Naive thymus-derived CD4-positive, alpha-beta T cell (primary cell): ENCODE measurements at regions of chr19 and their contacts with region 1.

Region 1: GRCh38 chr19:58408152-58409009 is at the start of gene ZNF584:
- DNase-seq: peak; percentile 86 to 94 (median 92)
- ATAC-seq: peak; percentile 98
- H3K4me3 ChIP-seq: peak within 1 kb of the TSS; percentile 96
- H3K4me3 Mint-ChIP-seq: peak within 1 kb of the TSS; percentile 82 to 98 (median 95)
- H3K27ac ChIP-seq: peak within 1 kb of the TSS; percentile 87
- H3K27ac Mint-ChIP-seq: peak within 1 kb of the TSS; percentile 83 to 95 (median 93)
- H3K4me1 ChIP-seq: peaks cover 12 to 15% of the 10 kb centered on the region in 2 donors
- H3K4me1 Mint-ChIP-seq: peaks cover 5 to 45% (median 34%) of the 10 kb centered on the region in 7 donors
- H3K27me3 ChIP-seq: no peaks in the 10 kb centered on the region
- H3K27me3 Mint-ChIP-seq: no peaks in the 10 kb centered on the region
- total RNA-seq, gene ZNF584: 4.2 to 12.1 (median 8.8) TPM

Region 2: DNA sequence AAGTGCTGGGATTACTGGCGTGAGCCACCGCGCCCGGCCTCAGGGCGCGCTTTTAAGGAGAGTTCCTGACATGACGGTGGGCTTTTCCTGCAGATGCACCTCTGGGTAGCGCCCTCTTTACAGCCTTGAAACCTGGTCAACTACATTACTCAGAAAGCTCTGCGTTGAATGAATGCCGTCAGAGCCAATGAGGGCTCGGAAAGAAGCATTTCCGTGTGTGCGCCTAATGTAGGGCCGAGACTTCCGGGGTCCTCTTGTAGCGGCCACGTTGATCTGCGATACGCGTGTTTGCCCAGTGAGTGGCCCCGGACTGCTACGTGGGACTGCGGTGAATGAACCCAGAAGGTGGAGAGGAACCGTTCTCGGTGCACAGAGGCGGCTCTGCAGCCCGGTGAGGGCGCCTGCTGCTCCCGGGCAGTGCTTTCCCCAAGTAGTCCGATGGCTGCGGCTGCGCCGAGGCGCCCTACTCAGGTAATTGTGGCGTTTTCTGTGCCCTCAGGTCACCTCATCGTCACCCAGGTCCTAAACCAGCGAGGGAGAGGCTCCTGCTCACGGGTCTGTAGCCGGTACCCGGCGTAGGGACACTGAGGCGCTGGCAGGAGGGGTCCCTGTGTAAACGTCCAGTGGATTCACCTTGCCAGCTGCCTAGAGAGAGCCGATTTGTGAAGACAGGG is 588.8 kb before region 1 on chr19:
- CTCF ChIA-PET with region 1: no interaction called
- POLR2A ChIA-PET with region 1: no interaction called
- intact Hi-C with region 1: loop called in 1 of 2 experiments (anchors 10 kb)
- DNase-seq: peak; percentile 45 to 85 (median 79)
- ATAC-seq: peak; percentile 89
- H3K4me3 ChIP-seq: peak overlapping the region; percentile 98
- H3K4me3 Mint-ChIP-seq: peak overlapping the region; percentile 95 to 99 (median 98)
- H3K27ac ChIP-seq: peak overlapping the region; percentile 92
- H3K27ac Mint-ChIP-seq: peak overlapping the region; percentile 88 to 99 (median 95)
- H3K4me1 ChIP-seq: peaks cover 0 to 13% of the 10 kb centered on the region in 2 donors
- H3K4me1 Mint-ChIP-seq: peaks cover 38 to 73% (median 67%) of the 10 kb centered on the region in 7 donors
- H3K27me3 ChIP-seq: no peaks in the 10 kb centered on the region
- H3K27me3 Mint-ChIP-seq: no peaks in the 10 kb centered on the region

Region 3: GRCh38 chr19:58326914-58327726 is 81.3 kb before region 1 on chr19 and contains the start of gene ZSCAN22:
- CTCF ChIA-PET with region 1: no interaction called
- POLR2A ChIA-PET with region 1: no interaction called
- intact Hi-C with region 1: loop called (anchors 1 kb)
- DNase-seq: peak; percentile 65 to 89 (median 78)
- ATAC-seq: peak; percentile 90
- H3K4me3 ChIP-seq: peak within 1 kb of the TSS; percentile 95
- H3K4me3 Mint-ChIP-seq: no peak within 1 kb of the TSS
- H3K27ac ChIP-seq: peak within 1 kb of the TSS; percentile 72
- H3K27ac Mint-ChIP-seq: no peak within 1 kb of the TSS
- H3K4me1 ChIP-seq: peaks cover 14 to 16% of the 10 kb centered on the region in 2 donors
- H3K4me1 Mint-ChIP-seq: peaks cover 0 to 10% (median 6%) of the 10 kb centered on the region in 7 donors
- H3K27me3 ChIP-seq: no peaks in the 10 kb centered on the region
- H3K27me3 Mint-ChIP-seq: no peaks in the 10 kb centered on the region
- total RNA-seq, gene ZSCAN22: 1.1 to 6.0 (median 4.5) TPM

Region 4: GRCh38 chr19:58355908-58356765 is 52.2 kb before region 1 on chr19:
- CTCF ChIA-PET with region 1: no interaction called
- POLR2A ChIA-PET with region 1: no interaction called
- intact Hi-C with region 1: no loop called
- DNase-seq: peak; percentile 30 to 63 (median 56)
- ATAC-seq: peak; percentile 68
- H3K4me3 ChIP-seq: peak overlapping the region; percentile 57
- H3K4me3 Mint-ChIP-seq: peak overlapping the region; percentile 52 to 78 (median 70)
- H3K27ac ChIP-seq: peak overlapping the region; percentile 56
- H3K27ac Mint-ChIP-seq: peak overlapping the region in 5 of 9 donors; percentile 19 to 58 (median 31)
- H3K4me1 ChIP-seq: peaks cover 0 to 6% of the 10 kb centered on the region in 2 donors
- H3K4me1 Mint-ChIP-seq: peaks cover 2 to 24% (median 13%) of the 10 kb centered on the region in 7 donors
- H3K27me3 ChIP-seq: no peaks in the 10 kb centered on the region
- H3K27me3 Mint-ChIP-seq: peaks cover 0 to 3% (median 0%) of the 10 kb centered on the region in 5 donors

Region 5: DNA sequence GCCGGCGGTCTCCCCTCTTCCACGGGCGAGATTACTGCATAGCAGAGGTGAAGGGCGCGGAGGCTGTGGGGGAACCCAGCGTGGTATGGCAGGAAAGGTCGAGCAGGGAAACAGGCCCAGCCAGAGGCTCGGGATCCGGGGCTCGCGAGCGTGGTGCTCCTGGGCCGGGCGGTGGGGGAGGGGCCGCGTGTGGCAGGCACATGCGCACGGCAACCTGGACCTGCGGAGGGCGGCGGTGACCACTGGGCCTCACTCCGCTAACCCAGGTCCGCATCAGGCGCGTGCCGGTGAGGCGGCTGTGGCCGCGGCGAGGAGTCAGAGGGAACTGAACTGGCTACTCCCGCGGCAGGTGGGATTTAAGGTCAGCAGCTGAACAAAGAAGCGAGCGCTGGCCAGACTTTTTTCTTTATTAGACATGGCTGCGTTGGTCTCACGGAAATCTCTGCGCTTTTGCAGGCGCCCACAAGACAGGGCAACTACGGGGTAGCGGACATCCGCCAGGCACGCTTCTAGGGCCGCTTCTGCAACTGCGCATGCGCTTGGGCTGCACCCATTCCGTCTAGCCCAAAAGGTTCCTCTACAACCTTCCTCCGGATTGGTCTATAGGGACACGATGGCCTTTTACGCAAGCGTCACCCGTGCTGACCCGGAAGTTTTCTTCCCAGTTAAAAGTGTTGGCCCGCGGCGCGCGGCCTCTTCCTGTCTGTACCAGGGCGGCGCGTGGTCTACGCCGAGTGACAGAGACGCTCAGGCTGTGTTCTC is 21.6 kb before region 1 on chr19 and contains the start of gene RPS5:
- CTCF ChIA-PET with region 1: interaction called, 3 read pairs
- POLR2A ChIA-PET with region 1: interaction called, 8 read pairs
- intact Hi-C with region 1: loop called (anchors 1 kb)
- DNase-seq: peak; percentile 84 to 98 (median 96)
- ATAC-seq: peak; percentile 97
- H3K4me3 ChIP-seq: peak within 1 kb of the TSS; percentile 75
- H3K4me3 Mint-ChIP-seq: peak within 1 kb of the TSS; percentile 89 to 96 (median 94)
- H3K27ac ChIP-seq: peak within 1 kb of the TSS; percentile 94
- H3K27ac Mint-ChIP-seq: peak within 1 kb of the TSS; percentile 94 to 99 (median 97)
- H3K4me1 ChIP-seq: peaks cover 26% of the 10 kb centered on the region in 2 donors
- H3K4me1 Mint-ChIP-seq: peaks cover 22 to 59% (median 45%) of the 10 kb centered on the region in 7 donors
- H3K27me3 ChIP-seq: no peaks in the 10 kb centered on the region
- H3K27me3 Mint-ChIP-seq: peaks cover 0 to 3% (median 0%) of the 10 kb centered on the region in 5 donors
- total RNA-seq, gene RPS5: 911 to 1,684 (median 1,502) TPM

Region 6: DNA sequence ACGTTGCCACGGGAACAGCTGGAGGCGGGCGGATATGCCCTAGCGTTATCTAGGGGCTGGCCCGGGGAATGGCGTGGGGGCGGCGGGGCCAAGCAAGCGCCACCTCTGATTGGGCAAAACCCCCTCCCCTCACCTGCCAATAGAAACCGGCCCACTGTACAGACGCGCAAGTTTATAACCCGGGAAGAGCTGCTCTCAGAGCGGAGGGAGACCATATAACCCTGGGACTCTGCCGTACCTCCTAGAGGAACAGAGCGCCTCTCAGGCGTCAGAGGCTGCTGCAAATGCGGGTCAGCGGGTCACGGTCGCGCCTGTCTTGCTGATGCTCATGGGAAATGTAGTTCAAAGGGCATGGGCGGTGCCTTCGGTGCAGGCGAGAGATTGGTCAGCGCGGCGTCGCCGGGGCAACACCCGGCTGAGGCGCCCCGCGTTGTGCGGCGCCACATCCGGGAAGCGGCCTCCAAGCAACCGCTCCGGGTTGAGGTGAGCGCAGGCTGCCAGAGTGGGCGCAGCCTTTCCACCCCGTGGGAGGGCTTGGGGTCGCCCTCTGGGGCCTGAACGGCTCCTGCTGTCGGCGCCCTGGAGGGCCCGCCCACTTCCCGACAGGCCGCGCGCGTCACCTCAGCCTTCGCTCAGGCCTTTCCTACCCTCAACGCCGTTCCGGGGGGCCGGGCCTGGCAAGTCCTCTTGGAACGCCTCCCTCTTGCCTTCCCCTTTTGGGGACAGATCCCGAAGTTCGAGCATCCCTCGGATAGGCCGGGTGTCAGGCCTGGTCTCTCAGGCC is 67.5 kb after region 1 on chr19 and contains the start of gene ZNF446:
- CTCF ChIA-PET with region 1: no interaction called
- POLR2A ChIA-PET with region 1: interaction called, 3 read pairs
- intact Hi-C with region 1: loop called (anchors 1 kb)
- DNase-seq: peak; percentile 84 to 97 (median 96)
- ATAC-seq: peak; percentile 92
- H3K4me3 ChIP-seq: peak within 1 kb of the TSS; percentile 77
- H3K4me3 Mint-ChIP-seq: peak within 1 kb of the TSS; percentile 78 to 99 (median 96)
- H3K27ac ChIP-seq: peak within 1 kb of the TSS; percentile 91
- H3K27ac Mint-ChIP-seq: peak within 1 kb of the TSS; percentile 87 to 100 (median 99)
- H3K4me1 ChIP-seq: peaks cover 14 to 16% of the 10 kb centered on the region in 2 donors
- H3K4me1 Mint-ChIP-seq: peaks cover 6 to 29% (median 17%) of the 10 kb centered on the region in 7 donors
- H3K27me3 ChIP-seq: no peaks in the 10 kb centered on the region
- H3K27me3 Mint-ChIP-seq: no peaks in the 10 kb centered on the region
- total RNA-seq, gene ZNF446: 9.5 to 20.0 (median 15.1) TPM

Region 7: GRCh38 chr19:58572818-58573657 is 164.7 kb after region 1 on chr19 and contains the start of gene MZF1:
- CTCF ChIA-PET with region 1: no interaction called
- POLR2A ChIA-PET with region 1: no interaction called
- intact Hi-C with region 1: loop called in 1 of 2 experiments (anchors 1 kb)
- DNase-seq: peak; percentile 97 to 100 (median 100)
- ATAC-seq: peak; percentile 81
- H3K4me3 ChIP-seq: peak within 1 kb of the TSS; percentile 71
- H3K4me3 Mint-ChIP-seq: peak within 1 kb of the TSS; percentile 82 to 100 (median 98)
- H3K27ac ChIP-seq: peak within 1 kb of the TSS; percentile 97
- H3K27ac Mint-ChIP-seq: peak within 1 kb of the TSS; percentile 97 to 100 (median 100)
- H3K4me1 ChIP-seq: peaks cover 19 to 20% of the 10 kb centered on the region in 2 donors
- H3K4me1 Mint-ChIP-seq: peaks cover 27 to 50% (median 33%) of the 10 kb centered on the region in 7 donors
- H3K27me3 ChIP-seq: no peaks in the 10 kb centered on the region
- H3K27me3 Mint-ChIP-seq: peaks cover 0 to 4% (median 0%) of the 10 kb centered on the region in 5 donors
- total RNA-seq, gene MZF1: 35.0 to 51.8 (median 44.9) TPM